Activated CD4-positive, alpha-beta memory T cell treated with anti-CD3 and anti-CD28 coated beads for 36 hours (primary cell): ENCODE measurements at regions of chr1 and their contacts with region 1.

Region 1: GRCh38 chr1:26541816-26542711 is 12.5 kb downstream of the RPS6KA1 start:
- DNase-seq: peak; percentile 94
- H3K4me3 Mint-ChIP-seq: peak overlapping the region; percentile 69
- H3K27ac Mint-ChIP-seq: peak overlapping the region; percentile 98
- H3K4me1 Mint-ChIP-seq: peaks cover 88% of the 10 kb centered on the region
- H3K27me3 Mint-ChIP-seq: no peaks in the 10 kb centered on the region

Region 2: DNA sequence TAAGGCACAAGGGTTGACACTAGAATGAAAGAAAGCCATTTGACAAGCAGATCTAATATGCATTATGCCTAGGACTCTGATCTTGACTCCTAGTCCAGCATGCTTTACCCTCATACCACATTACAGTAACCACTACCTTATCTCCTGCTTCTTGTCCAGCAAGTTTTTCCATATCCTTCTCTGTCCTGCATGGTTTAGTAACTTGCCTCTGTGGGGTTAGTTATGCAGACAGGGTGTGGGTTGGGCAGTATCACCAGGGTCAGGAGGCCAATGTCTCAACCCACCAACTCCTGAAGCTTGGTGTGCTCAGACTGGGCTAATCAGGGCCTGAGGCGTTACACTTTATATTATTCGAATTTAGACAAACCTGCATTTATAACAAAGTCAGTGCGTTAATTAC is 91.2 kb before region 1 on chr1:
- CTCF ChIA-PET with region 1: no interaction called
- POLR2A ChIA-PET with region 1: no interaction called
- intact Hi-C with region 1: no loop called
- DNase-seq: no peak
- H3K4me3 Mint-ChIP-seq: no peak overlapping the region
- H3K27ac Mint-ChIP-seq: no peak overlapping the region
- H3K4me1 Mint-ChIP-seq: no peaks in the 10 kb centered on the region
- H3K27me3 Mint-ChIP-seq: no peaks in the 10 kb centered on the region

Region 3: DNA sequence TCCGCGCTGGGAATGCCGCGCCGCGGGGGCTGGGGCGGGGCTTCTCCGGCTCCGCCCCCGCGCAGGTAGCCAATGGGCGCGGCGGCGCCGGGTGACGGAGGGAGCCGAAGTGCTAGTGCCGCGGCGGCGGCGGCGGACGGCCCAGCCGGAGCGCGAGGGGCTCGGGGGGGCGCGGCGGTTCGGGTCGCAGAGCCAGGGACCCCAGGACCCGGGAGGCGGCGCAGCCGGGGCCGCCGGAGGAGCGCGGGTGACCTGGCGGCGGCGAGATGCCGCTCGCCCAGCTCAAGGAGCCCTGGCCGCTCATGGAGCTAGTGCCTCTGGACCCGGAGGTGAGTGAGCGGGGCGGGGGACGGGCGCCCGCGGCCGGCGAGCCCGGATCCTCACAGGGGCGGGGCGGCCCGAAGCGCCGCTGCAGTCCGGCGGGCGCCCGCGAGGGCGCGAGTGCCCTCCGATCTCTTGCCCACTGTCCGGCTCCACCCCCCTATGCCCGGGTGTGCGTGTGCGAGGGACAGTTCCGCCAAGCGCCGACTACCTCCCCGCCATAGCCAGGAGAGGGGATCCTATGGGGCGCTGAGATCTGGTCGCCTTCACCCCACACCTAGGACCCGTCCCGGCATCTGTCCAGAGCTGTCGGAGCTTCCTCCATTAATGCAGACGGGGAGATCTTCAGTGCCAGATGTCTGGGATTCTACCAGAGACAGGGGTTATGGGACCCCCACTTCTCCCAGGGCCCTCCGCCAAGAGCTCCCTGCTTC is 12.2 kb before region 1 on chr1 and contains the start of gene RPS6KA1:
- CTCF ChIA-PET with region 1: interaction called, 127 read pairs
- POLR2A ChIA-PET with region 1: interaction called, 25 read pairs
- intact Hi-C with region 1: loop called (anchors 1 kb)
- DNase-seq: peak; percentile 68
- H3K4me3 Mint-ChIP-seq: peak within 1 kb of the TSS; percentile 83
- H3K27ac Mint-ChIP-seq: peak within 1 kb of the TSS; percentile 15
- H3K4me1 Mint-ChIP-seq: peaks cover 29% of the 10 kb centered on the region
- H3K27me3 Mint-ChIP-seq: no peaks in the 10 kb centered on the region
- total RNA-seq, gene RPS6KA1: 109 to 112 TPM

Region 4: GRCh38 chr1:26582836-26583460 is 40.9 kb after region 1 on chr1:
- CTCF ChIA-PET with region 1: interaction called, 22 read pairs
- POLR2A ChIA-PET with region 1: interaction called, 8 read pairs
- intact Hi-C with region 1: loop called (anchors 1 kb)
- DNase-seq: peak; percentile 94
- H3K4me3 Mint-ChIP-seq: no peak overlapping the region
- H3K27ac Mint-ChIP-seq: peak overlapping the region; percentile 73
- H3K4me1 Mint-ChIP-seq: peaks cover 47% of the 10 kb centered on the region
- H3K27me3 Mint-ChIP-seq: no peaks in the 10 kb centered on the region

Region 5: DNA sequence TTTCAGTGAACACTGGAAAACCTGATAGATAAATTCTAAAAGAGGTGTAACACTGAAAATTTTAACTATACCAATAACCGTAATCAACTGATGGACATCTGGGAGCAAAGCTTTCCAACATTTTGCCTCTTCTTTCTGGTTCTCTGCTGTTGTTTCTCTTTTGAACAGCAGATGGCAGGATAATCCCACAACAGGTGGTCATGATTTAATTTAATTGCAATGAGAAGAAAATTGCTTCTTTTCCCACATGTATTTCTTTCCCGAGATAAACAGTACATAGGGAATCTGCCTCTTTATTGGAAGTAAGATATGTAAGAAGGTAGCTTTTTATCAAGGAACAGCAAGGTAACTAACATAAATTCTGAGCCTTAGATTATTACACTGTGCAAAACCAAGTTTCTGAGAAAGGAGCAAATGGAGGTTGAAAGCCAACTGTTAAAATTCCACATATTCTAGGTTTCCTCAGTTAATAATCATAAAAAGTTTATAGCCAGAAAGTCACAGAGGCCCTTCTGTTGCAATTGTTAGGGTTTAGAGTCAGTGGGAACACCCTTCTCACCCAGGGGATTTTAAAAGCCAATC is 60.4 kb after region 1 on chr1:
- CTCF ChIA-PET with region 1: interaction called, 15 read pairs
- POLR2A ChIA-PET with region 1: no interaction called
- intact Hi-C with region 1: no loop called
- DNase-seq: no peak
- H3K4me3 Mint-ChIP-seq: no peak overlapping the region
- H3K27ac Mint-ChIP-seq: no peak overlapping the region
- H3K4me1 Mint-ChIP-seq: peaks cover 7% of the 10 kb centered on the region
- H3K27me3 Mint-ChIP-seq: no peaks in the 10 kb centered on the region